Left ventricle myocardium superior (tissue), 1 donor: ENCODE measurements at regions of chr6 and their contacts with region 1.

Region 1: GRCh38 chr6:52577022-52577777 is at the start of gene TRAM2:
- DNase-seq: peak; percentile 96
- ATAC-seq: peak; percentile 89
- total RNA-seq, gene TRAM2: 10.4 TPM

Region 2: GRCh38 chr6:52503848-52504781 is 73.1 kb before region 1 on chr6:
- intact Hi-C with region 1: loop called (anchors 5 kb)
- DNase-seq: peak; percentile 93
- ATAC-seq: peak; percentile 85